Motor neuron (in vitro differentiated cells): ENCODE measurements at regions of chr4 and their contacts with region 1.

Region 1: DNA sequence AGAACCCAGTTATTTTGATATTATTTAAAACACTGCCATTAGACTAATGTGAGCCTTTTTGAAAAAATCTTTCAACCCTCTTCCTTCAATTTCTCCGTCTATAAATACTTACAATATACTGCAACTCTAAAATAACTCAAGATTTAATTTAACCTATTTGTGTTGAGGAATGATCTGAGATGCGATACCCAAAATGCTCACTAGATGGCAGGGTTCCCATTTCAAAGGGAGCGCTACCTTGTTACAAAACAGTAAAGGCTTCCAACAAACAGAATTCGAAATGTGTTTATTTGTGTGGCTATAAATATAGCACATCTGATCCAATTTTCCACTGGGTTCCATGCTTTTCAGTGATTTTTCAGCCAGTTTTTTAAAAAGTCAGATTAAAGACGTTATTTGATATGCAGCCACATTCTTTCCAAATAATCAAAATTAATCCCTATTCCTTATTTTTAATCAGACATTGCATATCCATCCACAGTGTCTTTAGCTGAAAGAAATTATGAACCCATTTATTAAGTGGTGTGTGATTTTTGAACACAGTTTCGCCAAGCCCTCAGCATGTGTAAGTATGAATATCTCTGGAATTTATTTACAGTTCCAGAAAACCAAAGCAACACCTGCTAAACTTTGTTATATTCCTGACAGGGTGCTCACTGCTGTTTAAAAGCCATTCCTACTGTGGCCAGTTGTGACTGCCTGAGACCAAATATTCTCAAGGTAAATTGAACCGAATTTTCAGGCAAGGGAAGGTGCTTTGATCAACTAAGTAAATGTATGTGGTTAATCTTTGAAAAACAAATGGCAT is 668.0 kb upstream of the LCORL start:
- ATAC-seq: peak in 7 of 8 experiments; percentile 30 to 59 (median 39)
- H3K4me3 ChIP-seq: no peak overlapping the region
- H3K27ac ChIP-seq: no peak overlapping the region
- H3K4me1 ChIP-seq: peaks cover 0 to 3% of the 10 kb centered on the region in 2 donors

Region 2: DNA sequence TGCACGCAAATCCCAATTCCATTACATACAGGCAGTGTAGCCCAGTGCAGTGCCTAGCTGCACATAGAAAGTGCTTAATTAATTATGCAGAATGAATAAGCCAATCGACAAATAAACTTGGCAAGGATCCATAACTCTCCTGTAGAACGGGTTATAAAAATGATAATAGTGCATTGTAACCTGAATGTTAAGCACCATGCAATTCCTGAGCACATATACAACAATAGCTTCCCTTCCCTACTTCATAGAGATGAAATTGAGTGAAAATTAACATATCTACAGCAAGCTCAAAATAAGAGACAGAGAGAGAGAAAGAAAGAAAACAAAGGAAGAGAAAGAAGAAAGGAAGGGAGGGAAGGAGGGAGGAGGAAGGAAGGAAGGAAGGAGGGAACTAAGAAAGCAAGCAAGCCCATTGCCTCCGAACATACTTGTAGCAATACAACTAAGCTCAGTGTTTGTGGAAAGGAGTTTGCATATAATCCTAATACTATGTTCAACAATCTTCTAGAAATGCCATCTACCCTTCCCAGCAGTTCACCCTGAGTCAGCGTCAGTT is 406.1 kb after region 1 on chr4:
- in situ Hi-C with region 1: no loop called
- ATAC-seq: peak in 2 of 8 experiments; percentile 8 to 41
- H3K4me3 ChIP-seq: no peak overlapping the region
- H3K27ac ChIP-seq: no peak overlapping the region
- H3K4me1 ChIP-seq: peaks cover 0 to 3% of the 10 kb centered on the region in 2 donors

Region 3: GRCh38 chr4:19224820-19225219 is 535.3 kb after region 1 on chr4:
- in situ Hi-C with region 1: loop called in 1 of 9 experiments (anchors 25 kb)
- ATAC-seq: peak in 2 of 8 experiments; percentile 33 to 41
- H3K4me3 ChIP-seq: no peak overlapping the region
- H3K27ac ChIP-seq: no peak overlapping the region
- H3K4me1 ChIP-seq: no peaks in the 10 kb centered on the region

Region 4: DNA sequence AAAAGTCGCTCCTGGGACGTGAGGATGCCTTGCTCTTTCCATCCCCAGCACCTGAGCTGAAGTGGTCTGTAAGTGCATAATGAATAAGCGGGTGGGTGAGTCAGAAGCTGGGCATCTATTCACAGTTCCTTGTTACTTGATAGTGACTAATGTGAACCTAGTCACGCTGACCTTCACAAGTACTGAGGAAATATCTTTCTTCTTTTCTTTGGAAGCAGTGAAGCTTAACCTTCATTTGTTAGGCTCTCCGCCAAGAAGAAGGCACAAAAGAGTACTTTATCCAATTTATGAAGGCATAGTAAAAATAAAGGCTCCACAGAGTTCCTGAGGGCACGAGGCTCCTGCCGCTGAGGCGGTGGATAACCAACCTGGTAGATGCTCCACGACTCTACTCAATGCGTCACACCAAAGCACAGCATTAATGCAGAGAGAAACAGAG is 1086.5 kb after region 1 on chr4:
- in situ Hi-C with region 1: loop called in 1 of 9 experiments (anchors 25 kb)
- ATAC-seq: peak in 6 of 8 experiments; percentile 22 to 99 (median 98)
- H3K4me3 ChIP-seq: no peak overlapping the region
- H3K27ac ChIP-seq: no peak overlapping the region
- H3K4me1 ChIP-seq: peaks cover 3 to 10% of the 10 kb centered on the region in 2 donors

Region 5: GRCh38 chr4:20422398-20422797 is 1732.9 kb after region 1 on chr4:
- in situ Hi-C with region 1: loop called in 1 of 9 experiments (anchors 25 kb)
- ATAC-seq: peak; percentile 44 to 94 (median 62)
- H3K4me3 ChIP-seq: no peak overlapping the region
- H3K27ac ChIP-seq: no peak overlapping the region
- H3K4me1 ChIP-seq: peaks cover 0 to 8% of the 10 kb centered on the region in 2 donors